ENCODE measurements at regions of chr1 and their contacts with region 1.

Region 1: GRCh38 chr1:175319418-175320230 is 127.0 kb upstream of the KIAA0040 start:
- DNase-seq: peak; percentile 37
- ATAC-seq: peak; percentile 95
- H3K4me3 ChIP-seq: no peak overlapping the region
- H3K27ac ChIP-seq: no peak overlapping the region
- H3K4me1 ChIP-seq: no peaks in the 10 kb centered on the region
- H3K27me3 ChIP-seq: no peaks in the 10 kb centered on the region
- CTCF ChIP-seq: peak; percentile 88 to 96 (median 91)
- EP300 ChIP-seq: no peak
- POLR2A ChIP-seq: no peak
- RAD21 ChIP-seq: peak; percentile 94

Region 2: DNA sequence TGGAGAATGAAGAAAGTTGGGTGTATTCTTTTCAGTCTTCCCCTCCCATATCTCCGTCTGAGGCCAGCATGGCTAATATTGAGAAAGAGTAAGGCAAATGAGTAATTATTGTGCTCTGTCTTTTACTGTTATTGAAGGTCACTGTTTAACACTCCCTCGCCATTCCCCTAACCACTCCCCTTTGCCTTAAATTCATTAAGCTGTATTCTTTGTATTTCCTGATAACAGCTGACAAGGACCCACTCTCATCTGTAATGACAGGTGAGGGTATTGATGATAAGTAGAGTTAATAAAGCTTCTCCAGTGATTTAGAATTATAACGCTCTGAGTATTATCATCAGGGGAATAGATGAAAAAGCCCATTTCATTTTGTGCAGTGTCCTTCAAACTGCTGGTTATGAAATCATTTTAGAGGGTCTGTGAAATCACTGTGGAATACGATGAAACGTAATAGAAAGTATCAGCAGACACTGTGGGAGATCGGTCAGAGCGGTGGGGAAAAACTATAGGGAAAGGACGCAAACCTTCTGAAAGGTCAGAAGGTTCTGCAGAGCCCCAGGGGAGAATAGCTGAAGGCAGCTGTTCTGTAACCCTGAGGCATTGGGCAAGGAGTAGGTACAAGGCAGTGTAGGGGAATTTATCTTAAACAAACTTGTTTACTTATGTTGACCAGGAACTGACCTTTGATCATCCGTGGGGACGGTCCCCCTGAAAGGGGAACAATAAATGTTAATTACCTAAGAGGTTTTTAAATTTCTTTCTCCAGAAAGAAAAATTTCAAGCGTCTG is 366.1 kb before region 1 on chr1:
- CTCF ChIA-PET with region 1: no interaction called
- POLR2A ChIA-PET with region 1: no interaction called
- RAD21 ChIA-PET with region 1: no interaction called
- SMC1A ChIA-PET with region 1: no interaction called
- in situ Hi-C with region 1: no loop called
- intact Hi-C with region 1: no loop called
- DNase-seq: no peak
- ATAC-seq: peak; percentile 80
- H3K4me3 ChIP-seq: peak overlapping the region; percentile 59; the same call in 1 of the 2 replicates
- H3K27ac ChIP-seq: peak overlapping the region; percentile 48
- H3K4me1 ChIP-seq: peaks cover 25% of the 10 kb centered on the region
- H3K27me3 ChIP-seq: no peaks in the 10 kb centered on the region
- CTCF ChIP-seq: no peak
- EP300 ChIP-seq: peak; percentile 53 to 78; a peak in 2 of 4 replicates
- POLR2A ChIP-seq: no peak
- RAD21 ChIP-seq: no peak

Region 3: DNA sequence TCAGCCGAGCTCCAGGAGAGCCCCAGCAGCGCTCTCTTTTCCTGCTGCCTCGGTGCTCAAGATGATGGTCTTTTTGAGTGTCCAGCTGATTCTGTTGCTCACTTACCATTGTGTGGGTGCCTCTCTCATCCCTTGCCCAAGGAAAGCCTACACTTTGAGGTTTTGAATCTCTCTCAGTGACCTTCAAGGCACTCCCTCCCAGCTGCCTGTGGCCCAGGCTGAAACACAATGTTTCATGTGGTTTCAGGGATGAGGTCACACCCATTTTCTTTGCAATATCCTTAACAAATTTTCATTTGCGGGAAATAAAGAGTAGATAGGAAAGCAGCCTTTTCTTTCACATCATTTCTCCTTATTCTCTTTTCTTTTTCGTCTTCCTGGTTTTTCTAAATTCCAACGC is 283.8 kb before region 1 on chr1:
- CTCF ChIA-PET with region 1: interaction called, 5 read pairs
- POLR2A ChIA-PET with region 1: no interaction called
- RAD21 ChIA-PET with region 1: no interaction called
- SMC1A ChIA-PET with region 1: interaction called, 10 read pairs
- in situ Hi-C with region 1: loop called (anchors 5 kb)
- intact Hi-C with region 1: no loop called
- DNase-seq: no peak
- ATAC-seq: no peak
- H3K4me3 ChIP-seq: no peak overlapping the region
- H3K27ac ChIP-seq: no peak overlapping the region
- H3K4me1 ChIP-seq: no peaks in the 10 kb centered on the region
- H3K27me3 ChIP-seq: peaks cover 0 to 3% of the 10 kb centered on the region in 2 experiments; a peak in 2 of 4 replicates
- CTCF ChIP-seq: no peak
- EP300 ChIP-seq: no peak
- POLR2A ChIP-seq: no peak
- RAD21 ChIP-seq: no peak

Region 4: GRCh38 chr1:175162955-175163354 is 156.7 kb before region 1 on chr1:
- CTCF ChIA-PET with region 1: interaction called, 477 read pairs
- POLR2A ChIA-PET with region 1: interaction called, 3 read pairs
- RAD21 ChIA-PET with region 1: interaction called, 193 read pairs
- SMC1A ChIA-PET with region 1: interaction called, 268 read pairs
- in situ Hi-C with region 1: loop called (anchors 5 kb)
- intact Hi-C with region 1: no loop called
- DNase-seq: no peak
- ATAC-seq: no peak
- H3K4me3 ChIP-seq: no peak overlapping the region
- H3K27ac ChIP-seq: no peak overlapping the region
- H3K4me1 ChIP-seq: no peaks in the 10 kb centered on the region
- H3K27me3 ChIP-seq: no peaks in the 10 kb centered on the region
- CTCF ChIP-seq: no peak
- EP300 ChIP-seq: no peak
- POLR2A ChIP-seq: no peak
- RAD21 ChIP-seq: no peak

Region 5: GRCh38 chr1:175192630-175193526 is 126.7 kb before region 1 on chr1 and contains the start of gene KIAA0040:
- CTCF ChIA-PET with region 1: interaction called, 72 read pairs
- POLR2A ChIA-PET with region 1: interaction called, 3 read pairs
- RAD21 ChIA-PET with region 1: interaction called, 20 read pairs
- SMC1A ChIA-PET with region 1: interaction called, 35 read pairs
- in situ Hi-C with region 1: no loop called
- intact Hi-C with region 1: no loop called
- DNase-seq: no peak
- ATAC-seq: peak; percentile 78
- H3K4me3 ChIP-seq: peak within 1 kb of the TSS; percentile 83
- H3K27ac ChIP-seq: peak within 1 kb of the TSS; percentile 23
- H3K4me1 ChIP-seq: peaks cover 37% of the 10 kb centered on the region
- H3K27me3 ChIP-seq: no peaks in the 10 kb centered on the region
- CTCF ChIP-seq: peak in 1 of 3 experiments; percentile 27; a peak in 2 of 6 replicates
- EP300 ChIP-seq: no peak
- POLR2A ChIP-seq: peak; percentile 72
- RAD21 ChIP-seq: no peak
- polyA plus RNA-seq, gene KIAA0040: 7.6 to 8.3 TPM

Region 6: GRCh38 chr1:175274368-175274767 is 45.3 kb before region 1 on chr1:
- CTCF ChIA-PET with region 1: interaction called, 28 read pairs
- POLR2A ChIA-PET with region 1: no interaction called
- RAD21 ChIA-PET with region 1: interaction called, 3 read pairs
- SMC1A ChIA-PET with region 1: interaction called, 6 read pairs
- in situ Hi-C with region 1: no loop called
- intact Hi-C with region 1: no loop called
- DNase-seq: peak; percentile 17
- ATAC-seq: peak; percentile 97
- H3K4me3 ChIP-seq: no peak overlapping the region
- H3K27ac ChIP-seq: no peak overlapping the region
- H3K4me1 ChIP-seq: no peaks in the 10 kb centered on the region
- H3K27me3 ChIP-seq: no peaks in the 10 kb centered on the region
- CTCF ChIP-seq: no peak
- EP300 ChIP-seq: peak in 1 of 2 experiments; percentile 44; a peak in 1 of 4 replicates
- POLR2A ChIP-seq: no peak
- RAD21 ChIP-seq: no peak

Region 7: DNA sequence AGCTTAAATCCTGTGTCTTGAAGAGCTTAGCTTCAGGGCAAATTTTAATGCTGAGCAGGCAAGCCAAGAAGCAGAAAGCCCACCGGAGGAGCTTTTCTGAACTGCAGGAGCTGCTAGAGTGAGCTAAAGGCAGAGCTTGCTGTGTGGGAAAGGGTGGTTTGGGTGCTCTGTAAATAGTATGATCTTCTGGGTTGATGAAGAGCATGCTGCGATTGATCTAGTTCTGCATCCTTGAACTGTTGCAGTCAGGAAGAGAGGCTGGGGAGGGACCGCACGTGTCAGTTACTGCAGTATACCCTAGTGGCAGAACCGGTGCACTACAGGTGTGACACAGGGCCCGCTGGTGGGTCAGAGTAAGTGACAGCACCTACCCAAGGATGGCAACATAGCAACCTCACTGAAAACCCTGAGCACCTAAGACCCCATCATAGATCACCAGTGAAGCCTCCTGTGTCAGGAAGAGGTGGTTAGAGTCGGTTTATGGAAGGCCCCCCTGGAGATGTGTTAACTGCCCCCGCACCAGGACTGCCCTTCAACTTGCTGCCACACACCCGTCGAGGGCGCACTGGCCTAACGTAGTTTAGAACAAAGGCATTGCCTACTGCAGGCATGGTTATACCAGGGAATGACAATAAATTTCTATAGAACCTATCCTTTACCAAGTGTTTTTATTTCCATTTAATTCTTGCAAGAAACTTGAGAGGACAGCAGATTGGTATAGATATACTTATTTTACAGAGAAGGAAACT is 18.9 kb after region 1 on chr1:
- CTCF ChIA-PET with region 1: interaction called, 10 read pairs
- POLR2A ChIA-PET with region 1: no interaction called
- RAD21 ChIA-PET with region 1: interaction called, 3 read pairs
- SMC1A ChIA-PET with region 1: interaction called, 4 read pairs
- in situ Hi-C with region 1: no loop called
- intact Hi-C with region 1: no loop called
- DNase-seq: no peak
- ATAC-seq: peak; percentile 99
- H3K4me3 ChIP-seq: no peak overlapping the region
- H3K27ac ChIP-seq: no peak overlapping the region
- H3K4me1 ChIP-seq: no peaks in the 10 kb centered on the region
- H3K27me3 ChIP-seq: peaks cover 2 to 7% of the 10 kb centered on the region in 2 experiments; a peak in 3 of 4 replicates
- CTCF ChIP-seq: peak; percentile 40 to 80 (median 74)
- EP300 ChIP-seq: no peak
- POLR2A ChIP-seq: no peak
- RAD21 ChIP-seq: no peak

Region 8: DNA sequence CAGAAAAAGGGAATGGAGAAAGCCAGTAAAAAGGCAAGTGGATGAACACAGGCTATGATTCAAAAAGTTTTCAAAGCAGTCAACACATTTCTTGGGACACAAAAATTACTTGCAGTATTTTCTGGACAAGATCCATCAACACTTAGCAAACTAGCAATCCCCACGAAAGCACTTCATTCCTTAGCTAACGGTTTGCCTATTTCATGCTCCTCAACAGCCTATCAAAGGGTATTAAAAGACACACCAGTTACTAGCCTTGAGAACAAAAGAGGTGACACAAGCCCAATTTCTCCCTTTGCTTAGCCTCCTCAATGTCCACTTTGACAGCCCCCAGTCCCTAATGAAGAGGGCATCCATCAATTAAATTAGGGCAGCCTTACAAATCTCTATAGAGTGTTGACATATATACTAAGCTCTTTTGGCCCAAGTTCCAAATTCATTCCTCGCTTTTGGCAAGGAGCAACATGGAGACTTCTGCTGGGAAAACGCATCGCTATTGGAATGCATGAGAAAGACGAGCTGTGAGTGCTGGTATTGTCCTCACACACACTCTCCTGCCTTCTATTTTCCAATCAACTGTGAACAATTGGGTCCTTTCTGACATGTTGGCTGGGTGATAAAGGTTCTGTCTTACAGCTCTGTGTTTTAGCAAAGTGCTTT is 243.7 kb after region 1 on chr1:
- CTCF ChIA-PET with region 1: no interaction called
- POLR2A ChIA-PET with region 1: no interaction called
- RAD21 ChIA-PET with region 1: no interaction called
- SMC1A ChIA-PET with region 1: no interaction called
- in situ Hi-C with region 1: no loop called
- intact Hi-C with region 1: no loop called
- DNase-seq: no peak
- ATAC-seq: no peak
- H3K4me3 ChIP-seq: no peak overlapping the region
- H3K27ac ChIP-seq: no peak overlapping the region
- H3K4me1 ChIP-seq: no peaks in the 10 kb centered on the region
- H3K27me3 ChIP-seq: no peaks in the 10 kb centered on the region
- CTCF ChIP-seq: no peak
- EP300 ChIP-seq: no peak
- POLR2A ChIP-seq: no peak
- RAD21 ChIP-seq: no peak

Measured in GM12878 (cell line).